Aorta (tissue), 5 donors: ENCODE measurements at regions of chr14 and their contacts with region 1.

Region 1: DNA sequence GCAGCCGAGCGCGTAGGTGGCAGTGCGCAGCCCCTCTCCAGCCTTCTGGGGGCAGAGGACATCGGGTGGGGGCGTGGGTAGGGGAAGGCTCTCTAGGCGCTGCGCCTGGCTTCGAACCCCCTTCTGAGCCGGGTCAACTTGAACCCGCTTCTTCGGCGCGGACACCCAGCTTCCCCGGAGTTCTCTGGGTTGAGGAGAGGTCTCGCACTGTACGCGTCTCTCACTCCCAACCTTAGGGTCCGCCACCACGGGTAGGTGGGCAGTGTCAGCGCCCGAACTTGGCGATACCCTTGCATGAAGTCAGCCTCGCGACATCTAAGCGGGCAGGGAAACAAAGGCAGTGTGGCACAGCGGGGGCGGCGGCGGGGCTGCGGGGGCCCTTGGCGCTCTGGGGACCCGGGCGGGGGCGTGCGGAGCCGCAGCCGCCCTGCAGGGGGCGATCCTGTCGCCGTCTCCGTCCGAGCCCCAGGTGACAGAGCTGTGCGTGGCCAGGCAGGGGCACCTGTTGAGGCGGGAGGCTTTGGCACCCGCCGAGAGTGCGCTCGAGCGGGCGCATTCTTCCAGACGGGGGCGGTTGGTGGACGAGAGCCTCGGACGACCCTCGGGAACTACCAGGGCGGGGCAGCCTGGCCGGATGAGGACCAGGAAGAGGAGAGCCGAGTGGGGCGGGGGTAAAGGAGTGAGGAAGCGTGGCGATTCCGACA is 1.1 kb downstream of the GALNT16 start:
- DNase-seq: peak in 1 of 2 donors; percentile 83
- ATAC-seq: peak; percentile 51
- H3K4me3 ChIP-seq: peak overlapping the region; percentile 37 to 50
- H3K27ac ChIP-seq: no peak overlapping the region
- H3K4me1 ChIP-seq: no peaks in the 10 kb centered on the region
- H3K27me3 ChIP-seq: no peaks in the 10 kb centered on the region

Region 2: GRCh38 chr14:69354383-69355153 is 93.6 kb after region 1 on chr14:
- intact Hi-C with region 1: loop called in 1 of 2 experiments (anchors 10 kb)
- DNase-seq: no peak
- ATAC-seq: no peak
- H3K4me3 ChIP-seq: no peak overlapping the region
- H3K27ac ChIP-seq: no peak overlapping the region
- H3K4me1 ChIP-seq: no peaks in the 10 kb centered on the region
- H3K27me3 ChIP-seq: no peaks in the 10 kb centered on the region

Region 3: DNA sequence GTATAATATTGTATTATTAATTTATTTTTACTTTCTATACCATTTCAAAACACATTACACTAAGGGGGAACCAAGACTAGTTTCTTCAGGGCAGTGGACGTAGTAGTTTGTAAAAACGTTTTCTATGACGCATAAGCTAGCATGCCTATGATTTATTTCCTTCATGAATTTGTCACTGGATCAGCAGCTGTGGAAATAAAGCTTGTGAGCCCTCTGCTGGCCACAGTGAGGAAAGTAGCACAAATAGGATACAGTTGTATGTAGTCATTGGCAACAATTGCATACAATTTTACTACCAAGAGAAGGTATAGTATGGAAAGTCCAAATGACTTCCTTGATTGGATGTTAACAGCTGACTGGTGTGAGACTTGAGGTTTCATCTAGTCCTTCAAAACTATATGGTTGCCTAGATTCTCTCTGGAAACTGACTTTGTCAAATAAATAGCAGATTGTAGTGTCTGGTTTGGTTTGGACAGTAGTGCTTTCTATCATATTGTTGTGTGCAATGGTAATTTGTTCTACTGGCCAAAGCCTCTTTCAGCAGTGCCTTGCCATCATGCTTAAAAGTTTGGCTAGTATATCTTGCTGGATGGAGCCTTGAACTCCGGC is 199.2 kb after region 1 on chr14:
- intact Hi-C with region 1: no loop called
- DNase-seq: peak in 1 of 2 donors; percentile 70
- ATAC-seq: peak; percentile 91
- H3K4me3 ChIP-seq: no peak overlapping the region
- H3K27ac ChIP-seq: no peak overlapping the region
- H3K4me1 ChIP-seq: no peaks in the 10 kb centered on the region
- H3K27me3 ChIP-seq: no peaks in the 10 kb centered on the region